CD4-positive, alpha-beta T cell (primary cell): ENCODE measurements at regions of chr9 and their contacts with region 1.

Region 1: GRCh38 chr9:120742951-120743416 is 28.7 kb upstream of the MEGF9 start:
- DNase-seq: peak in 3 of 14 experiments; percentile 40 to 54 (median 52)
- ATAC-seq: peak; percentile 68
- H3K4me3 ChIP-seq: no peak overlapping the region
- H3K4me3 Mint-ChIP-seq: no peak overlapping the region
- H3K27ac ChIP-seq: no peak overlapping the region
- H3K27ac Mint-ChIP-seq: no peak overlapping the region
- H3K4me1 ChIP-seq: no peaks in the 10 kb centered on the region
- H3K4me1 Mint-ChIP-seq: no peaks in the 10 kb centered on the region
- H3K27me3 ChIP-seq: no peaks in the 10 kb centered on the region
- H3K27me3 Mint-ChIP-seq: no peaks in the 10 kb centered on the region
- CTCF ChIP-seq: peak; percentile 68

Region 2: GRCh38 chr9:120619751-120620655 is 123.0 kb before region 1 on chr9:
- CTCF ChIA-PET with region 1: no interaction called
- POLR2A ChIA-PET with region 1: no interaction called
- intact Hi-C with region 1: loop called in 1 of 2 experiments (anchors 5 kb)
- DNase-seq: peak; percentile 26 to 77 (median 41)
- ATAC-seq: peak; percentile 94
- H3K4me3 ChIP-seq: no peak overlapping the region
- H3K4me3 Mint-ChIP-seq: no peak overlapping the region
- H3K27ac ChIP-seq: no peak overlapping the region
- H3K27ac Mint-ChIP-seq: no peak overlapping the region
- H3K4me1 ChIP-seq: no peaks in the 10 kb centered on the region
- H3K4me1 Mint-ChIP-seq: peaks cover 4% of the 10 kb centered on the region
- H3K27me3 ChIP-seq: no peaks in the 10 kb centered on the region
- H3K27me3 Mint-ChIP-seq: no peaks in the 10 kb centered on the region
- CTCF ChIP-seq: peak; percentile 86

Region 3: GRCh38 chr9:120767456-120768167 is 24.6 kb after region 1 on chr9:
- CTCF ChIA-PET with region 1: no interaction called
- POLR2A ChIA-PET with region 1: no interaction called
- intact Hi-C with region 1: loop called in 1 of 2 experiments (anchors 1 kb)
- DNase-seq: no peak
- ATAC-seq: no peak
- H3K4me3 ChIP-seq: no peak overlapping the region
- H3K4me3 Mint-ChIP-seq: no peak overlapping the region
- H3K27ac ChIP-seq: no peak overlapping the region
- H3K27ac Mint-ChIP-seq: peak overlapping the region; percentile 40
- H3K4me1 ChIP-seq: no peaks in the 10 kb centered on the region
- H3K4me1 Mint-ChIP-seq: no peaks in the 10 kb centered on the region
- H3K27me3 ChIP-seq: no peaks in the 10 kb centered on the region
- H3K27me3 Mint-ChIP-seq: no peaks in the 10 kb centered on the region
- CTCF ChIP-seq: no peak